Esophagus muscularis mucosa (tissue), 4 donors: ENCODE measurements at regions of chr15 and their contacts with region 1.

Region 1: DNA sequence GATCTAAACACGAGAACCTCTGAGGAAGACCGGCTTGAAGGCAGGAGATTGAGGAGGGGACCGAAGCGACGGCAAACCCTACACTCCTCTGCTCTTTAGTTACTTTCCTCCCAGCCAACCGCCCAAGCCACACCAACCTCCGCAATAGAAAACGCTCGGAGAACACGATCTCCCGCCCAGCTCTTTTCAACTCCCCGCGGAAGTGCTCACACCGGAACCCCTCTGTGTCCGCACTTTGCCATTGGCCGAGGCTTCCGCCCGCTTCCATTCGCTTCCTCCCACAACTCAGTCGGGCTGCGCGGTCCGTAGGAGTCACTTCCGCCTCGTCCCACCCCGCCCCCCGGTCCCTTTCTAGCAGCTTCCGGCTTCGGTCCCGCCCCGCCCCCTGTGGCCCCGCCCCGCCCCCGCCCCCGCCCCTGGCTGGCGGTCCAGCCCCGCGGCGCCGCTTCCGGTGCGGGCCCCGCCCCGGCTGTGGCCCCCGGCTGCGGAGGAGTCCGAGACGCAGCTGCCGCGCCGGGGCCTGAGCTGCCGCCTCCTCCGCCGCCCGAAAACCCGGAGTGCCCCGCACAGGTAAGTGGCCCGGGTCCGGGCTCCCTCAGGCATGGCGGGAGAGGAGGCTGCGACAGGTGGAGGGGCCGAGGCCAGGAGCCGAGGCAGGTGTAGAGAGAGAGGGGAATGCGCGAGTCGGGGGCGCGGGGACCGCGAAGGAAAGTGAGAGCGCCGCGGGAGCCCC is at the start of gene ARID3B:
- DNase-seq: peak; percentile 99
- H3K4me3 ChIP-seq: peak within 1 kb of the TSS; percentile 93 to 99 (median 98)
- H3K27ac ChIP-seq: peak within 1 kb of the TSS; percentile 81 to 85 (median 83)
- H3K4me1 ChIP-seq: peaks cover 15 to 46% (median 37%) of the 10 kb centered on the region in 4 donors
- H3K27me3 ChIP-seq: no peaks in the 10 kb centered on the region
- CTCF ChIP-seq: no peak
- EP300 ChIP-seq: no peak
- POLR2A ChIP-seq: no peak
- total RNA-seq, gene ARID3B: 3.6 to 6.8 (median 6.7) TPM

Region 2: DNA sequence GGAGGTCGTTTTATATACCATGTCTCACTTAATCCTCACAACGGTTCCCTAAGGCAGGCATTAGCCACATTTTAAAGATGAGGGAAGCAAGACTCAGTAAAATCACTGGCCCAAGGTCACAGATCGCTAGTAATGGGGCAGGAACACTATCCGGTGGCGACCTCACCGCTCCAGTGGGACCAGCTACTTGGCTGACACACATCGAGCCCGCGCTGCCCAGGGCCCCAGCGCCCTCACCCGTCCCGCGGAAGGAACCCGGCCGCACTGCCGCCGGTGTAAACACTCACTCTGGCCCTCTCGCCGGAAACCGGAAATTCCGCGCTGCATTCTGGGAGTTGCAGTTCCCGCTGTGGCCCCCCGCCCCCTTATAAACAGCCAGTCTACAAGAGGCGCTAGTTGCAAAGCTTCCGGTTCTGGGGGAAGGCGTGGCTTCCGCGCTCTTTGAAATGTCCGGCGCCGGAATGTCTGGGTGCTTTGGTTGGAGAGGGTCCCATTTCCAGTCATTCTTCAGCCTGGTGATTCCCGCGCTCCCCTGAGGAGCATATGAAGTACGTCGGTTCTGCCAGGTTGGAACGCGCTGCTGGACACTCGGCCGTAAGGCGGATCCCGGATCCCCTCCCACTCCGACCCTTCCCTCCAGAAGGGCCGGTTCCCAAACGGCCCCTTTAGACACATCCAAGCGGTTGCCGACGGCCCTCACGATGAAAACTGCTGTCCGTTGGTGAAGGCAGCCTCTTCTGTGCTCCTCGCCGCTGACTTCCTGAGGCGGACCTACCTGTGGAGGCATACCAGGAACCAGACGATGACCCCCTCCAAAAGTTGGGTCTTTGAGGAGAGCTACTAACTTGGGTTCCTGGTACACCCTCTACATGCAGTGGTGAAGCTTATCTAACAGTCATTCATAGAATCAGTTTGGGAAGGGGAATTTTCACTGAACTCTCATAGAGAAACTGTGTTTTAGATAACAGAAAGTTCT is 79.8 kb before region 1 on chr15 and contains the start of gene UBL7:
- intact Hi-C with region 1: loop called (anchors 5 kb)
- DNase-seq: peak; percentile 99
- H3K4me3 ChIP-seq: peak within 1 kb of the TSS; percentile 71 to 83 (median 78)
- H3K27ac ChIP-seq: peak within 1 kb of the TSS; percentile 85 to 93 (median 88)
- H3K4me1 ChIP-seq: peaks cover 17 to 31% (median 24%) of the 10 kb centered on the region in 4 donors
- H3K27me3 ChIP-seq: no peaks in the 10 kb centered on the region
- CTCF ChIP-seq: peak; percentile 12 to 41 (median 19)
- EP300 ChIP-seq: no peak
- POLR2A ChIP-seq: peak; percentile 75
- total RNA-seq, gene UBL7: 52.7 to 69.7 (median 60.5) TPM

Region 3: GRCh38 chr15:74615508-74616365 is 74.8 kb after region 1 on chr15 and contains the start of gene CLK3:
- intact Hi-C with region 1: loop called (anchors 2 kb)
- DNase-seq: peak; percentile 96
- H3K4me3 ChIP-seq: peak within 1 kb of the TSS; percentile 97 to 100 (median 98)
- H3K27ac ChIP-seq: peak within 1 kb of the TSS; percentile 97 to 100 (median 99)
- H3K4me1 ChIP-seq: peaks cover 45 to 62% (median 50%) of the 10 kb centered on the region in 4 donors
- H3K27me3 ChIP-seq: no peaks in the 10 kb centered on the region
- CTCF ChIP-seq: peak in 1 of 3 experiments; percentile 25
- EP300 ChIP-seq: no peak
- POLR2A ChIP-seq: peak; percentile 65
- total RNA-seq, gene CLK3: 74.6 to 89.8 (median 80.7) TPM

Region 4: GRCh38 chr15:74695597-74696397 is 154.9 kb after region 1 on chr15 and contains the start of gene EDC3:
- intact Hi-C with region 1: loop called (anchors 10 kb)
- DNase-seq: peak; percentile 95
- H3K4me3 ChIP-seq: peak within 1 kb of the TSS; percentile 71 to 94 (median 89)
- H3K27ac ChIP-seq: peak within 1 kb of the TSS; percentile 85 to 89 (median 87)
- H3K4me1 ChIP-seq: peaks cover 14 to 37% (median 28%) of the 10 kb centered on the region in 4 donors
- H3K27me3 ChIP-seq: no peaks in the 10 kb centered on the region
- CTCF ChIP-seq: peak in 1 of 3 experiments; percentile 15
- EP300 ChIP-seq: no peak
- POLR2A ChIP-seq: no peak
- total RNA-seq, gene EDC3: 9.6 to 19.5 (median 17.9) TPM

Region 5: GRCh38 chr15:74956648-74957300 is 415.8 kb after region 1 on chr15 and contains the start of gene RPP25:
- intact Hi-C with region 1: loop called (anchors 10 kb)
- DNase-seq: no peak
- H3K4me3 ChIP-seq: peak within 1 kb of the TSS; percentile 68 to 77 (median 69)
- H3K27ac ChIP-seq: peak within 1 kb of the TSS; percentile 68 to 81 (median 73)
- H3K4me1 ChIP-seq: peaks cover 34 to 58% (median 57%) of the 10 kb centered on the region in 4 donors
- H3K27me3 ChIP-seq: peaks cover 0 to 35% (median 20%) of the 10 kb centered on the region in 4 donors
- CTCF ChIP-seq: no peak
- EP300 ChIP-seq: no peak
- POLR2A ChIP-seq: no peak
- total RNA-seq, gene RPP25: 4.2 to 7.2 (median 7.0) TPM

Region 6: DNA sequence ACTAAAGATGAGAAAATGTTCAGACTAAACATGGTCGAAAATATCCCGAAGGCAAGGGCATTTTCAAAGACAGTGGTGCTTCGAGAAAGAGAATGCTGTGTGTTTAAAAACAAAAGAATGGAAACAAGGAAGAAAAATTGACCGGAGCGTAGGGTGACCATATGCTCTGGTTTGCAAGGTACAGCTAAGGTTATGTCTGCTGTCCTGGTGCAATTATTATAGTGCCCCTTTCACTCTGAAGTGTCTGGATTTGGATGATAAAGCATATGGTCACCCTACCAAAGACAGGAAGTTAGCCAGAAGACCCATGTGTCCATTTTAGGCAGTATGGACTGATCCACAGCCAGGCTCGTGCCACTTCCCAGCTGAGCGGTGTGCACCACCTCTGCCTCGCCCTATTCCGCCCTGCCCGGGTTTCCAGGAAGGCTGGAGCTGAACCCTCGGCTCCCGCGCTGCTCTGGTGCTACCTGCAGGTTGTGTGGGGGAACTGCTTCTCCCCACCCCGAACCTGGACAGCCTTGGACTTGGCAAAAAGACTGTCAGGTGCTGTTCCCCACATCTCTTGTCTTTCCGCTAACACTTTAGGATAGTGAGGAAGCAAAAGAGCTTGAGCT is 767.0 kb after region 1 on chr15:
- intact Hi-C with region 1: no loop called
- DNase-seq: no peak
- H3K4me3 ChIP-seq: no peak overlapping the region
- H3K27ac ChIP-seq: no peak overlapping the region
- H3K4me1 ChIP-seq: no peaks in the 10 kb centered on the region
- H3K27me3 ChIP-seq: peaks cover 0 to 44% (median 2%) of the 10 kb centered on the region in 4 donors
- CTCF ChIP-seq: peak in 1 of 3 experiments; percentile 15
- EP300 ChIP-seq: no peak
- POLR2A ChIP-seq: no peak